Right lobe of liver (tissue), 6 donors: ENCODE measurements at regions of chr17 and their contacts with region 1.

Region 1: DNA sequence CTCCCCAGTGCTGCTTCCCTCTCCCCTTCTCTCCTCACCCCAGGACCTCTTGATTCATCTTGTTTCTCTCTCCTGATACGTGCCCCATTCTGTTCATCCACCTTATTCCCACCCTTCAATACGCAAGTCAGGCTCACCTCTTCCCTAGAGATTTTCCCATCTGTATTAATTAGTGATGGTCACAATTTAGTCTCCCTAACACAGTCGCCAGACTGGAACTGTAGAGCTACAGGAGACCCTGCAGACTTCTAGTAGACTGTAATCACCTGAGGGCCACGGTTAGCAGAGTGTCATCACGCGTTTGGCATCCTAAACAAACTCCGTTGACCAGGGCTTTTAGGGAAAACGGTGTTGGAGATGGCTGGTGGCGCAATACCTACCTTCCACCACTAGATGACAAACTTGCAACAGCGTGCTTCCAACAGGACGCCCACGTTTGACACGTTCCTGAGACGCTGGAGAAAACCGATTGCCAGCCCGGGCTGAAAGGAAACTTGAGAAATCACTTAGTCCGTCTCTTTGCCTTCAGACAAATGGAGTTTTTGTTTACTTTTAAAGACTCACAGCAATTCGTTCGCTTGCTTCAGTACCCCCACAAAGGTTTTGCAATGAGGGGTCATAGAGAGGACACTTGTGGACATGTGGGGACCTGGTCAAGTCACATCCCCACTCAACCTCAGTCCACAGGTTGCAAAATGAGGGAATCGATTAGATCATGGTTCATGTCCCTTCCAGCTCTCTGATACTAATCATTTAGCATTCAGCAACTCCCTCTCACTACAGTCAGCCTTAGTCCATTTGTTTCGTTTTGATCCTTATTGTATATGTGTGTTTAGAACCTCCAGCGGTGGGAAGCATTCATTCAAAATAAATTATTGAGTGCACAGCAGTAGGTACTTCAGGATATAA is 20.6 kb downstream of the MYL4 start:
- DNase-seq: peak; percentile 84 to 92 (median 90)
- ATAC-seq: peak; percentile 79 to 88 (median 85)
- H3K4me3 ChIP-seq: peak overlapping the region; percentile 34 to 54 (median 50)
- H3K27ac ChIP-seq: peak overlapping the region; percentile 41 to 90 (median 82)
- H3K4me1 ChIP-seq: peaks cover 0 to 35% (median 2%) of the 10 kb centered on the region in 4 donors
- H3K27me3 ChIP-seq: no peaks in the 10 kb centered on the region
- CTCF ChIP-seq: peak; percentile 96 to 98 (median 96)
- POLR2A ChIP-seq: peak; percentile 56

Region 2: DNA sequence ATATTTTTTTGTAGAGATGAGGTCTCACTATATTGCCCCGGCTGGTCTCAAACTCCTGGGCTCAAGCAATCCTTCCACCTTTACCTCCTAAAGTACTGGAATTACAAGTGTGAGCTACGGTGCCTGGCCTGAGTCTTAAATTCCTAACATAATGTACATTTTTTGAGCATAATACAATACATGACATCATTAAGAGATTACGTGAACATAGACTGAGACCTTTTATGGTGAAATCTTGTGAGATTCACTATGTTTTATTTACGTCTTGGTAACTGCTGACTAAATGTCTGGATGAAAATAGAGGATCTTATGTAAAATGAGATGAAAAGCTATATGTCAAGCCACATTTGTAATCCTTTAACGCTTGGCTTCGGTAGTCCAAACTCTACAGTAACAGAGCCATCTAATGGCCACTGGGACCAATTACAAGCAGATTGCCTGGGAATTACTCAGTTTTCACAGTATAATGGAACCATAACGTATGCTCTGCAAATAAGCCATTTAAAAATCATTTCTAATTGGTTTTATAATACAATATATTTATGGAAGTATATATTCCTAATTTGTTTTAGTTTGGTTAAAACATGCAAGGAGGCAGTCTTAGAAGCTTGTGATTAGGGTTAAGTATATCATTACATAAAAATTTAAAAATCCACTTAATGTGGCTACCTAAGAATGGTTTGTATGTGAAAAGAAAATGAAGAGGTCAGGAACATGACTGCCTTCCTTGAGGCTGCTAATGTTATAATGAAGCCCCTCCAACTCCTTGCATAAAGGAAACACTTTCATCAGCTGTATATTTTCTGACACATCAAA is 85.9 kb after region 1 on chr17:
- intact Hi-C with region 1: loop called in 1 of 2 experiments (anchors 10 kb)
- DNase-seq: no peak
- ATAC-seq: peak; percentile 84 to 94 (median 90)
- H3K4me3 ChIP-seq: peak overlapping the region in 1 of 3 donors; percentile 17
- H3K27ac ChIP-seq: peak overlapping the region; percentile 66 to 92 (median 74)
- H3K4me1 ChIP-seq: peaks cover 0 to 30% (median 6%) of the 10 kb centered on the region in 4 donors
- H3K27me3 ChIP-seq: no peaks in the 10 kb centered on the region
- CTCF ChIP-seq: peak; percentile 80 to 87 (median 85)
- POLR2A ChIP-seq: no peak

Region 3: DNA sequence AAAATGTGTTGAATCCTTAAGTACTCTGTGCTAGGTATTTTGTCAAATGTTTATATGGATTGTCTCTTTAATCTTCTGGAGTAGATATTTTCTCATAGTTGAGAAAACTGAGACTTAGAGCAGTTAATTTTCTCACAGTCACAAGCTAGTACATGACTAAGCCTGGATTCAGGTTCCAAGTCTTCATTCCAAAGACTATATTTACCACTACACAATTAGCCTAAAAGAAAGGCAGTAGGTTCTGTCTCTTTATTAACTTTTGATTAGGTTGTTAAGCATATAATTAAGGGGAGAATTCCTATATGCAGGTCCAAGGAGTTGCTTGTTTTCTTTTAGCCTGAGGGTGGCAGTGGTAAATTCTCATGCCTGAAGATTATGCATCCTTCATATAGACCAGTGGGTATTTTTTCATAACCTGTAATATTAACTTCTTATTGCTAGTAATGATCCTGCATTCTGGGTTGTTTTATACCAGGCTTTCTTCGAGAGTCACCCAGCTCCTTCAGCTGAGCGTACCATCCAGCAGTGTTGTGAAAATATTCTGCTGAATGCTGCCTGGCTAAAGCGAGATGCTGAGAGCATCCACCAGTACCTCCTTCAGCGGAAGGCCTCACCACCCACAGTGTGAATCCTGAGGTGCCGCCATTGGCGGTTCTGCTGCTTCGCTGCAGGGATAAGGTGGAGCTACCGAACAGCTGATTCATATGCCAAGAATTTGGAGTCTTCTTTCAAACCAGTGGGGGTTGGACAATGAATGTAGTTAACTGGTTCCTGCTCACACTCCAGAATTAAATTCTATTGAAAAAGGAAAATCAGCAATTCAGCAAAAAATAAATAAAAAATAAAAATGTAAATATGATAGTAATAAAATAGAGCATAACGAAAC is 391.7 kb after region 1 on chr17:
- intact Hi-C with region 1: loop called in 1 of 2 experiments (anchors 10 kb)
- DNase-seq: no peak
- ATAC-seq: peak in 2 of 4 donors; percentile 22 to 25
- H3K4me3 ChIP-seq: no peak overlapping the region
- H3K27ac ChIP-seq: no peak overlapping the region
- H3K4me1 ChIP-seq: peaks cover 0 to 22% (median 2%) of the 10 kb centered on the region in 4 donors
- H3K27me3 ChIP-seq: no peaks in the 10 kb centered on the region
- CTCF ChIP-seq: no peak
- POLR2A ChIP-seq: no peak